Activated CD8-positive, alpha-beta T cell treated with anti-CD3 and anti-CD28 coated beads, Interleukin-2, amount 10 ng/mL, durations not matched to agents 7 days and 5 days (primary cell): ENCODE measurements at regions of chr1 and their contacts with region 1.

Region 1: DNA sequence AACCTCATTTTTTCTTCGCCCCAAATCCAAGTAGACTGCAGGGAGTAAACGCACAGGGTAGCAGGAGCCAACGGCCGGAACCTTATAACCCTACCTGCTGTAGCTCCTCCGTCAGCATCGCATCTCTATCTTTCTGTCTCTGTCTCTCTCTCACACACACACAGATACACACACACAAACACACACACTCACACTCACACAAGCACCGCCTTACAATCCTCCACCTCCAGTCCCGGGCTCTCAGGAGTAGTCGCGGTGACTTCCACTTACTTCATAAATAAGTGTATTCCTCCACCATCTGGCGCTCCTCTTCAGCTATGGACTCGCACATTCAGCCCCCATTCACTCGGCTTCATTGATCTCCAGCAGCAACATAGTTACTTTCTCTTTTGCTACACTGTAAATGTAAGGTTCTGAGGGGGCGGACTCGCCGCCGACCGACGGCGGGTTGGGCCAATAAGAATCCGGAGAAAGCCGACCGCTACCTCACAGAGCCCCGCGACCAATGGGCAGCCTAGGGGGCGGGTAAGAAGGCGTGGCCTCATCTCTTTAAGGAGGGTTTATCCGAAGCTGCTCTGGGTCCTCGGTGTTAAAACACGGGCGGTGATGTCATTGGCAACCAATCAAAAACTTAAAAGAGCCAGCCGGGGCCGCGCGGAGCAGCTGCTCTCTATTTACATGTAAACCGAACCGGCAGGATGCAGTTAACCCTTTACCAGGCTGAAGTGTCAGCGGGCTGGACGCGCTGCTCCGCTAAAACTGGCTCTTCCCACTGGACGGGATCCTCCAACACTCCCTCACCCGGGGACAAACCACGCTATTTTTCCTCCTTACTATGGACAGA is at the start of gene DUSP10:
- DNase-seq: peak; percentile 100
- ATAC-seq: peak; percentile 84
- H3K4me3 Mint-ChIP-seq: no peak within 1 kb of the TSS
- H3K27ac Mint-ChIP-seq: no peak within 1 kb of the TSS
- H3K4me1 Mint-ChIP-seq: peaks cover 15% of the 10 kb centered on the region
- H3K27me3 Mint-ChIP-seq: no peaks in the 10 kb centered on the region
- total RNA-seq, gene DUSP10: 12.1 to 13.0 TPM

Region 2: GRCh38 chr1:221478050-221478949 is 263.6 kb before region 1 on chr1:
- CTCF ChIA-PET with region 1: interaction called, 32 read pairs
- POLR2A ChIA-PET with region 1: interaction called, 7 read pairs
- DNase-seq: peak; percentile 59
- ATAC-seq: peak; percentile 84
- H3K4me3 Mint-ChIP-seq: no peak overlapping the region
- H3K27ac Mint-ChIP-seq: no peak overlapping the region
- H3K4me1 Mint-ChIP-seq: no peaks in the 10 kb centered on the region
- H3K27me3 Mint-ChIP-seq: peaks cover 2% of the 10 kb centered on the region

Region 3: GRCh38 chr1:221697923-221698425 is 44.0 kb before region 1 on chr1:
- CTCF ChIA-PET with region 1: interaction called, 22 read pairs
- POLR2A ChIA-PET with region 1: interaction called, 16 read pairs
- DNase-seq: no peak
- ATAC-seq: no peak
- H3K4me3 Mint-ChIP-seq: no peak overlapping the region
- H3K27ac Mint-ChIP-seq: no peak overlapping the region
- H3K4me1 Mint-ChIP-seq: peaks cover 17% of the 10 kb centered on the region
- H3K27me3 Mint-ChIP-seq: no peaks in the 10 kb centered on the region

Region 4: GRCh38 chr1:221725735-221726672 is 15.9 kb before region 1 on chr1:
- CTCF ChIA-PET with region 1: interaction called, 14 read pairs
- POLR2A ChIA-PET with region 1: interaction called, 56 read pairs
- DNase-seq: no peak
- ATAC-seq: peak; percentile 61
- H3K4me3 Mint-ChIP-seq: peak overlapping the region; percentile 52
- H3K27ac Mint-ChIP-seq: peak overlapping the region; percentile 59
- H3K4me1 Mint-ChIP-seq: peaks cover 70% of the 10 kb centered on the region
- H3K27me3 Mint-ChIP-seq: no peaks in the 10 kb centered on the region

Region 5: GRCh38 chr1:221777431-221778072 is 35.6 kb after region 1 on chr1:
- CTCF ChIA-PET with region 1: interaction called, 15 read pairs
- POLR2A ChIA-PET with region 1: interaction called, 46 read pairs
- DNase-seq: peak; percentile 77
- ATAC-seq: peak; percentile 68
- H3K4me3 Mint-ChIP-seq: peak overlapping the region; percentile 61
- H3K27ac Mint-ChIP-seq: peak overlapping the region; percentile 93
- H3K4me1 Mint-ChIP-seq: peaks cover 85% of the 10 kb centered on the region
- H3K27me3 Mint-ChIP-seq: no peaks in the 10 kb centered on the region

Region 6: GRCh38 chr1:221829327-221830015 is 87.5 kb after region 1 on chr1:
- CTCF ChIA-PET with region 1: interaction called, 11 read pairs
- POLR2A ChIA-PET with region 1: interaction called, 66 read pairs
- DNase-seq: peak; percentile 71
- ATAC-seq: peak; percentile 84
- H3K4me3 Mint-ChIP-seq: peak overlapping the region; percentile 58
- H3K27ac Mint-ChIP-seq: peak overlapping the region; percentile 92
- H3K4me1 Mint-ChIP-seq: peaks cover 87% of the 10 kb centered on the region
- H3K27me3 Mint-ChIP-seq: no peaks in the 10 kb centered on the region

Region 7: GRCh38 chr1:221994274-221994698 is 252.4 kb after region 1 on chr1:
- CTCF ChIA-PET with region 1: interaction called, 3 read pairs
- POLR2A ChIA-PET with region 1: interaction called, 11 read pairs
- DNase-seq: peak; percentile 23
- ATAC-seq: no peak
- H3K4me3 Mint-ChIP-seq: no peak overlapping the region
- H3K27ac Mint-ChIP-seq: no peak overlapping the region
- H3K4me1 Mint-ChIP-seq: peaks cover 29% of the 10 kb centered on the region
- H3K27me3 Mint-ChIP-seq: no peaks in the 10 kb centered on the region